Kidney (tissue), 22 donors: ENCODE measurements at regions of chr22 and their contacts with region 1.

Region 1: GRCh38 chr22:23849009-23850006 is 8.4 kb upstream of the SLC2A11 start:
- DNase-seq: peak; percentile 89 to 94 (median 91)
- H3K4me3 ChIP-seq: no peak overlapping the region
- H3K27ac ChIP-seq: no peak overlapping the region
- H3K4me1 ChIP-seq: peaks cover 0 to 26% (median 0%) of the 10 kb centered on the region in 3 donors
- H3K27me3 ChIP-seq: no peaks in the 10 kb centered on the region
- CTCF ChIP-seq: peak; percentile 97

Region 2: DNA sequence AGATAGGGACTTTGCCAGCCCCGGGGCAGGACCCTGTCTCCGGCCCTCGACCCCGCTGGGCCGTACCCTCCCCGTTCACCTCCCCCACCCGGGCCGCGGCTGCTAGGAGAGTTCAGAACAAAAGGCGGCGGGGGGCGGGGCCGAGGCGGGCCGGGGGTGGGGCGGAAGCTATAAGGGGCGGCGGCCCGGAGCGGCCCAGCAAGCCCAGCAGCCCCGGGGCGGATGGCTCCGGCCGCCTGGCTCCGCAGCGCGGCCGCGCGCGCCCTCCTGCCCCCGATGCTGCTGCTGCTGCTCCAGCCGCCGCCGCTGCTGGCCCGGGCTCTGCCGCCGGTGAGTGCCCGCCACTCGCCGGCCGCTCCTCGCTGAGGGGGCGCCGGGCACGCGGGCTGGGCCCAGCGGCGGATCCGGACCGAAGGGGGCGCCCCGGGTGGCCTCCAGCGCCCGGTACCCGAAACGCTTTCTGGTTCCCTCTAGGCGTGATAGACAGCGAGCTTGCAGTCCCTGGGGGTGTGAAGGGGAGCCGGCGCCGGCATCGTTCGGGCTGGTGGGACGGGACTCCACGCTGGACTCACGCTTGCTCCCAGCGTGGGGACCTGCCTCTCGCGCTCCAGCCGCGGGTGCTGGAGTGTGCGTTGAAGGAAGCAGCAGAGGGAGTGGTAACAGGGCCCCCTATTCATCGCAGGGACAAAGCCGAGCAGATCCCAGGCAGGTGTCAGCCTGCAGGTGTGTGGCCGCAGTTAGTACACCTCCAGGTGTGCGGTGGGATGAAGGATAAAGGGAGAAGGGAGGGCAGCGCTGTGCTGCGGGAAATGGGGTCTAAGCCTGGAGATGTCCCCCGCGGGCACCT is 76.4 kb before region 1 on chr22 and contains the start of gene MMP11:
- intact Hi-C with region 1: loop called (anchors 10 kb)
- DNase-seq: peak; percentile 64 to 91 (median 85)
- H3K4me3 ChIP-seq: peak within 1 kb of the TSS; percentile 20 to 57 (median 44)
- H3K27ac ChIP-seq: no peak within 1 kb of the TSS
- H3K4me1 ChIP-seq: peaks cover 0 to 29% (median 14%) of the 10 kb centered on the region in 3 donors
- H3K27me3 ChIP-seq: no peaks in the 10 kb centered on the region
- CTCF ChIP-seq: no peak
- total RNA-seq, gene MMP11: 4.4 TPM